ENCODE measurements at regions of chr11 and their contacts with region 1.

Region 1: GRCh38 chr11:57031556-57031955 is 42.8 kb downstream of the OR5AK2 start:
- DNase-seq: no peak
- ATAC-seq: peak; percentile 64 to 71
- H3K4me3 ChIP-seq: no peak overlapping the region
- H3K27ac ChIP-seq: no peak overlapping the region
- H3K4me1 ChIP-seq: peaks cover 2% of the 10 kb centered on the region
- H3K27me3 ChIP-seq: no peaks in the 10 kb centered on the region

Region 2: DNA sequence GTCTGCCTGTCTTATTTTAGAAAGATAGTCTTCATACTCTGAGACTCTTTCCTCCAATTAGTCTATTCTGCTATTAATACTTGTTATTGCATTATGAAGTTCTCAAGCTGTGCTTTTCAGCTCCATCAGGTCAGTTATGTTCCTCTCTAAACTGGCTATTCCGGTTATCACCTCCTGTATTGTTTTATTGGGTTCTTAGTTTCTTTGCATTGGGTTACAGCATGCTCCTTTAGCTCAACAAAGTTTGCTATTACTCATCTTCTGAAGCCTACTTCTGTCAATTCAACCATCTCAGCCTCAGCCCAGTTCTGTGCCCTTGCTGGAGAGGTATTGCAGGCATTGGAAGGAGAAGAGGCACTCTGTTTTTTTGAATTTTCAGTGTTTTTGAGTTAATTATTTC is 63.8 kb before region 1 on chr11:
- intact Hi-C with region 1: loop called in 1 of 4 experiments (anchors 10 kb)
- DNase-seq: no peak
- ATAC-seq: no peak
- H3K4me3 ChIP-seq: no peak overlapping the region
- H3K27ac ChIP-seq: no peak overlapping the region
- H3K4me1 ChIP-seq: no peaks in the 10 kb centered on the region
- H3K27me3 ChIP-seq: no peaks in the 10 kb centered on the region